Transverse colon (tissue), 4 donors: ENCODE measurements at regions of chr2 and their contacts with region 1.

Region 1: DNA sequence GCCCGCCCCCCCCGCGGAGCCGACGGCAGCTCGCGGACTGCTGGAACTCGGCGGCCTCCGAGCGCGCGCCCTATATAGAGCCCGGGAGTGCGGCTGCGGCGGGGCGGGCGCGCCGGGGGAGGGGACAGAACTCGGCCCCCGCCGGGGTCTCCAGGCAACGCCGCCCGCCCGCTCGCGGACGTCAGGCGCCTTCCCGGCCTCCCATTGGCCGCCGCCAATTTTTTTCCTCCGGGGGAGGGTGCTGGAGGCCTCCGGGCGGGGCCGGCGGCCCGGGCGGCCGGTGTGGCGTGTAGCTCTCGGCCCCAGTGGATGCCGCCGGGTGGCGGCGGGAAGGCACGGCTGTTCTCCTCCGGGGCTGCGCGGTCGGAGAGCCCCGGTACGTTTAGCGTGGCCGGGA is at the start of gene ZFP36L2:
- DNase-seq: peak; percentile 97
- H3K4me3 ChIP-seq: peak within 1 kb of the TSS; percentile 85 to 91 (median 90)
- H3K27ac ChIP-seq: peak within 1 kb of the TSS; percentile 96 to 100 (median 99)
- H3K4me1 ChIP-seq: peaks cover 15 to 35% (median 32%) of the 10 kb centered on the region in 4 donors
- H3K27me3 ChIP-seq: no peaks in the 10 kb centered on the region
- CTCF ChIP-seq: peak in 1 of 5 experiments; percentile 40
- EP300 ChIP-seq: no peak
- POLR2A ChIP-seq: peak; percentile 98
- total RNA-seq, gene ZFP36L2: 114 to 305 (median 208) TPM

Region 2: DNA sequence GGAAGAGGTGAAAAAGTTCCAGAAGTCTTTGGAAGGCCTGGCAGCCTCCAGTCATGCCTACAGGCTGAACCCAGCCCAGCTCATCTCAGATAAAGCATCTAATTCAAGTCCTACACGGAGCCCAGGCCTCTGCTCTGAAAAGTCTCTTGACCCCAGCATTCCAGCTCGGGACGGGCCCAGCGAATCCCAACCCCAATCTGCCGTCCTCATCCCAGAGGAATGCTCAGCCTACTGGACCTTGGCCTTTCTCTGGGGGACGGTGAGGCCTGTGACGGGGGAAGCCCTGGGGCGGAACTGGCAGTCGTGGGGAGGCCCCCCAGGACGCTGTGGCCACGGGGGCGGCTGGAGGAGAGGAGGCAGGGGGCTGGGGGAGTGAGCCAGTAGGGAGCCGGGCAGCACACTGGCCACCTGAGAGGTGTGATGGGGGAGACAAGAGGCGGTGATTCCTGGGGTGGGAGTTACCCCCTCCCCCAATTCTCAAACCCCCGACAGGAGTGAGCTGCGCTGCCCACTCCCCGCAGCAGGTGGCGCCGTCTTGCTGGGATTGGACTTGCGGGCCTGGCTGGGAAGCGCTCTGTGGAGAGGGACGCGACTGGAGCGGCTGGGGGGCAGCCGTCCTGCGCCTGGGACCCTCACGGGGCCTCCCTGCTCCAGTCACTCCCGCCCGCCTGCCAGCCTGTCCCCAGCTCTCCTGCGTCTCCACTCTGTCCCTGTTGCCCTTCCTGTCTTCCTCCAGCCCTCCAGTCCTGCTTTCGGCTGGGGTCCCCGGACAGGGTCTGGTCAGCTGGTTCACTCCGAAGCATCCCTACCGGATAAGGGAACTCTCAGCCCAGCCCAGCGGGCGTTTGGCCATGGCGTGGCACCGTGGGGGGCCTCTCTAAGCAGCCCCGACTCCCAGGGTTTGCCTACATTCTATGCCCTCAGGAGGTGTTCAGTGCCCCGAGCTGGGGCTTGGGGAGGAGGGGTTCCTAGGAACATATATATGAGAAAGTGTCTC is 251.5 kb before region 1 on chr2:
- in situ Hi-C with region 1: loop called in 1 of 4 experiments (anchors 10 kb)
- intact Hi-C with region 1: loop called (anchors 2 kb)
- DNase-seq: peak; percentile 79
- H3K4me3 ChIP-seq: peak overlapping the region in 3 of 4 donors; percentile 16 to 46 (median 31)
- H3K27ac ChIP-seq: peak overlapping the region; percentile 58 to 81 (median 70)
- H3K4me1 ChIP-seq: peaks cover 14 to 42% (median 32%) of the 10 kb centered on the region in 4 donors
- H3K27me3 ChIP-seq: no peaks in the 10 kb centered on the region
- CTCF ChIP-seq: peak; percentile 93 to 97 (median 95)
- EP300 ChIP-seq: no peak
- POLR2A ChIP-seq: no peak

Region 3: DNA sequence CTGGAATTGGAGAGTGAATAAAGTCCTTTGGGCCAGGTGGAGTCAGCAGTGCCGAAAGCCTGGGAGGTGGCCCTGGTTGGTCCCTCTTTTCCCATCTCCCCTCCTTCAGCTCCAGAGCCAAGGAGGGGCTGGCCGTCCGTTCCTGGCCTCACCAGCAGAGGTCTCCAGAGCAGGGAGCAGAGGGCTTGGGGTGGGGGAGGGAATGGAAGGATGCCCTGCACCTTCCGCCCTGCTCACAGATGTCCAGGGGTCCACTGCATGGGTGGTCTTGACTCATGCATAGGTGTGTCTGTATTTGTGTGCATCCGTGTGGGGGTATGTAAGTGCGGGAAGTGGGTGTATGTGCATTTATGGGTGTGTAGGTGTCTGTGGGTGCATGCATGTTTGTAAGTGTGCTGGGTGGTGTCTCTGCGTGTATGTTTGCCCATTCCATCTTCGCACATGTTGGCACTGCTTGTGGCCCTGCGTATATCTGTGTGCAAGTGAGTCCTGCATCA is 202.0 kb before region 1 on chr2:
- in situ Hi-C with region 1: loop called in 1 of 4 experiments (anchors 10 kb)
- intact Hi-C with region 1: loop called (anchors 5 kb)
- DNase-seq: peak; percentile 83
- H3K4me3 ChIP-seq: no peak overlapping the region
- H3K27ac ChIP-seq: peak overlapping the region; percentile 7 to 54 (median 31)
- H3K4me1 ChIP-seq: peaks cover 4 to 35% (median 17%) of the 10 kb centered on the region in 4 donors
- H3K27me3 ChIP-seq: no peaks in the 10 kb centered on the region
- CTCF ChIP-seq: peak; percentile 77 to 86 (median 81)
- EP300 ChIP-seq: no peak
- POLR2A ChIP-seq: no peak

Region 4: GRCh38 chr2:43127208-43127940 is 99.2 kb before region 1 on chr2:
- in situ Hi-C with region 1: loop called in 2 of 4 experiments (anchors 5 to 10 kb)
- intact Hi-C with region 1: no loop called
- DNase-seq: peak; percentile 84
- H3K4me3 ChIP-seq: no peak overlapping the region
- H3K27ac ChIP-seq: peak overlapping the region; percentile 83 to 89 (median 86)
- H3K4me1 ChIP-seq: peaks cover 20 to 60% (median 34%) of the 10 kb centered on the region in 4 donors
- H3K27me3 ChIP-seq: no peaks in the 10 kb centered on the region
- CTCF ChIP-seq: peak; percentile 52 to 78 (median 59)
- EP300 ChIP-seq: no peak
- POLR2A ChIP-seq: no peak

Region 5: DNA sequence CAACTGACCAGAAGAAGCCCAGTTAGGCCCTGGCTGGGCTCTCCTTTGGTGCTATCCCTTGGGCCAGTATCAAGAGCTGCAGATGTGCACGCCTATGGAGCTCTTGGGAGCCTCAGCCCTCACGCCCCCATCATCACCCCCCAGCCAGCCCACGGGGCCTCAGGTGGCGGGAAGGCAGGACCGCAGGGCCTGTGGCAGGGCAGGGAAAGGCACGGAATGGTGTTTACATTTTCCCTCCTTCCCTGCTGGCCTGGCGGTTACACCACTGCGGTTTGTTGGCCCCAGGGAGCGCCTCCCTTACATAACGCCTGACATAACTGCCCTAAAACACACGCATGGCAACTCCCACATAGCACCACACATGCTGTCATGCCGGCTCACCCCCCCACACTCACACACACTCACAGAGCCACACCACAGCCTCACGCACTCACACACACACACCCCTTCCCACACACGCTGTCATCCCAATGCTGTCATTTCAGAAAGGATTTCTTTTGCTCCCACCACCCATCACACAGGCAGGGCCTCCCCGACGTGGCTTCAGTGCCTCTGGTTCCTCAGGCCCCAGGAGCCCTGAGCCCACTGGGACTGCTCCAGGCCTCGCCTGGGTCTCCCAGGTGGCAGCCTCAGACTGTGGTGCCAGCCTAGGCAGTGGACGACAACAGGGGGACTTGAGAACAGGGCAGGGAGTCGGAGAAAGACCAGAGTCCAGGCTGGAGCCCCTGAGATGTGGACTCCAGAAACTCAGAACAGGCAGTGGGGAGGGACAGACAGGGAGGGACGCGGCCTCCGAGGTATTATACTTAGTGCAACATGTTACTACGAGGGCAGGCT is 15.9 kb before region 1 on chr2:
- in situ Hi-C with region 1: no loop called
- intact Hi-C with region 1: no loop called
- DNase-seq: peak; percentile 68
- H3K4me3 ChIP-seq: no peak overlapping the region
- H3K27ac ChIP-seq: peak overlapping the region; percentile 55 to 70 (median 64)
- H3K4me1 ChIP-seq: peaks cover 7 to 21% (median 11%) of the 10 kb centered on the region in 4 donors
- H3K27me3 ChIP-seq: no peaks in the 10 kb centered on the region
- CTCF ChIP-seq: peak in 1 of 5 experiments; percentile 9
- EP300 ChIP-seq: no peak
- POLR2A ChIP-seq: no peak

Region 6: GRCh38 chr2:43331422-43331821 is 104.9 kb after region 1 on chr2:
- in situ Hi-C with region 1: no loop called
- intact Hi-C with region 1: no loop called
- DNase-seq: no peak
- H3K4me3 ChIP-seq: no peak overlapping the region
- H3K27ac ChIP-seq: peak overlapping the region; percentile 30 to 77 (median 58)
- H3K4me1 ChIP-seq: peaks cover 16 to 59% (median 25%) of the 10 kb centered on the region in 4 donors
- H3K27me3 ChIP-seq: no peaks in the 10 kb centered on the region
- CTCF ChIP-seq: no peak
- EP300 ChIP-seq: no peak
- POLR2A ChIP-seq: no peak

Region 7: GRCh38 chr2:43343573-43344304 is 117.2 kb after region 1 on chr2:
- in situ Hi-C with region 1: no loop called
- intact Hi-C with region 1: loop called (anchors 10 kb)
- DNase-seq: peak; percentile 70
- H3K4me3 ChIP-seq: no peak overlapping the region
- H3K27ac ChIP-seq: peak overlapping the region; percentile 74 to 84 (median 84)
- H3K4me1 ChIP-seq: peaks cover 30 to 72% (median 47%) of the 10 kb centered on the region in 4 donors
- H3K27me3 ChIP-seq: no peaks in the 10 kb centered on the region
- CTCF ChIP-seq: no peak
- EP300 ChIP-seq: no peak
- POLR2A ChIP-seq: no peak

Region 8: GRCh38 chr2:43542285-43542937 is 315.9 kb after region 1 on chr2:
- in situ Hi-C with region 1: no loop called
- intact Hi-C with region 1: loop called (anchors 10 kb)
- DNase-seq: no peak
- H3K4me3 ChIP-seq: no peak overlapping the region
- H3K27ac ChIP-seq: peak overlapping the region in 1 of 4 donors; percentile 10
- H3K4me1 ChIP-seq: peaks cover 0 to 27% (median 10%) of the 10 kb centered on the region in 4 donors
- H3K27me3 ChIP-seq: no peaks in the 10 kb centered on the region
- CTCF ChIP-seq: peak; percentile 60 to 74 (median 63)
- EP300 ChIP-seq: no peak
- POLR2A ChIP-seq: no peak